Activated B cell treated with CpG ODN at 0.5 μM for 24 hours (primary cell): ENCODE measurements at regions of chr4 and their contacts with region 1.

Region 1: DNA sequence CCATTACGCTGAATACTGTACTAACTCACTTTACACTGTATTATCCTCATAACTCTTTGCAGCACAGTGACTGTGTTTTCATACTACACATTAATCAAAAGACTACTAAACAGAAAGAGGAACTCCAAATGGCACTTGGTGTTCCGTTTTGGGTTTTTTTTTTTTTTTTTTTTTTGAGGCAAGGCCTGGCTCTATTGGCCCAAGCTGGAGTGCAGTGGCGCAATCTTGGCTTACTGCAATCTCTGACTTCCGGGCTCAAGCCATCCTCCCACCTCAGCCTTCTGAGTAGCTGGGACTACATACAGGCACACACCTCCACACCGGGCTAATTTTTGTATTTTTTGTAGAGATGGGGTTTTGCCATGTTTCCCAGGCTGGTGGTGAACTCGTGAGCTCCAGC is 10.7 kb downstream of the KLHL8 start:
- DNase-seq: peak; percentile 22
- ATAC-seq: peak; percentile 96
- H3K4me3 Mint-ChIP-seq: peak overlapping the region; percentile 71
- H3K27ac Mint-ChIP-seq: peak overlapping the region; percentile 80
- H3K4me1 Mint-ChIP-seq: peaks cover 20% of the 10 kb centered on the region
- H3K27me3 Mint-ChIP-seq: no peaks in the 10 kb centered on the region
- CTCF ChIP-seq: no peak

Region 2: DNA sequence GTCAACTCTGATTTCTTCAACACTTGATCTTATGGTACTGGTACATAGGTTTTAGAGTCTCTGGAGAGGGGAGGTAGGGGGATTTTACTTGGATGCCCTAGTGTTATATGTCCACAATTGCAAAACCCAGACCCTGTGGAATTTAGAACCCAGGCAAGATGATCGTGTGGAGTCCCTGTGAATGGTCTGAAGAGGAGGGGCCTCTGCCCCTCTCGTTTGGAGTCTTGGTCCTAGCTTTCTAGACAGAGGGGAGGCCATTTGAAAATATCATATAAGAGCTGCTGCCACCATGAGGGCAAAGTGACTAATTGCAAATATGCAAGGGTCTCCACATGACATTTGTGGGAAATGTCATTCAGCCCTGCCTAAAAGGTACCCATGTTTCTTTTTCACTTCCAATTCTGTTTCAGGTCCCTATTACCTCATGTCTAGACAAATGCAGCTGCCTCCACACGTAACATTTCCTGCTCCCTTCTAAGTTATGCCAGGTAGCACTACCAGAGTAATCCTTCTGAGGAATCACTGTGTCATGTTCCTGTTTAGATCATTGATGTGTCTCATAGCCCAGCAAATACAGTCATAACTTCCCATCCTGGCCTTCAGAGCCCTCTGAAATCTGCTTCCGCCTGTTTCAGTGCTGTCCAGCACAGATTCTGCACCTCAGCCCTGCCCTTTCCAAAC is 116.1 kb before region 1 on chr4:
- CTCF ChIA-PET with region 1: no interaction called
- POLR2A ChIA-PET with region 1: no interaction called
- intact Hi-C with region 1: no loop called
- DNase-seq: no peak
- ATAC-seq: peak; percentile 89
- H3K4me3 Mint-ChIP-seq: no peak overlapping the region
- H3K27ac Mint-ChIP-seq: peak overlapping the region; percentile 62
- H3K4me1 Mint-ChIP-seq: peaks cover 20% of the 10 kb centered on the region
- H3K27me3 Mint-ChIP-seq: no peaks in the 10 kb centered on the region
- CTCF ChIP-seq: peak; percentile 15

Region 3: GRCh38 chr4:87192145-87192919 is 17.4 kb before region 1 on chr4:
- CTCF ChIA-PET with region 1: no interaction called
- POLR2A ChIA-PET with region 1: interaction called, 3 read pairs
- intact Hi-C with region 1: loop called (anchors 2 kb)
- DNase-seq: no peak
- ATAC-seq: no peak
- H3K4me3 Mint-ChIP-seq: no peak overlapping the region
- H3K27ac Mint-ChIP-seq: no peak overlapping the region
- H3K4me1 Mint-ChIP-seq: peaks cover 3% of the 10 kb centered on the region
- H3K27me3 Mint-ChIP-seq: no peaks in the 10 kb centered on the region
- CTCF ChIP-seq: no peak